H1 (cell line): ENCODE measurements at regions of chr1 and their contacts with region 1.

Region 1: DNA sequence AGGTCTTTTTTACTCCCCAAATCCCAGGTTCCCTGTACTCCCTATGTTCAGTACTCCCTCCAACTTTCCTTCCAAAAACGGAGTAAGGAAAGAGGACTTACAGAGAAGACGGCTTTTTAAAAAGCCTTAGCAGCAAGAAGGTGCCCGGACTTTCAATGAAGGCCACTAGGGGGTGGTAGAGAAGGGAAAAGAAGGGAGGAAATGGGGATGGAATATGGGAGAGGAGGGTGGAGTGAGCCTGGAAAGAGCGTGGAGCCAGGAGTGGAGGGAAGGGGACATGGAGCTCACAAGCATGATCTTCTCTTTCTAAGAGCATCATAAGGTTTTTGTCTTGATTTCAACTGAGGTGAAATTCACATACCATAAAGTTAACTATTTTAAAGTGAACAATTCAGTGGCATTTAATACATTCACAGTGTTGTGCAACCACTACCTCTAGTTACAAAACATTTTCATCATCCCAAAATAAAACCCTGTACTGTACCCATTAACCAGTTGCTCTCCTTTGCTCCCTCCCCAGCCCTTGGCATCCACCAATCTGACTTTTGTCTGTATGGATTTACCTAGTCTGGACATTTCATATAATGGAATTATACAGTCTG is 129.9 kb downstream of the ZNF281 start:
- DNase-seq: peak; percentile 36 to 84
- H3K4me3 ChIP-seq: no peak overlapping the region
- H3K27ac ChIP-seq: no peak overlapping the region
- H3K4me1 ChIP-seq: peaks cover 0 to 4% (median 0%) of the 10 kb centered on the region in 4 experiments; a peak in 2 of 7 replicates
- H3K27me3 ChIP-seq: no peaks in the 10 kb centered on the region
- CTCF ChIP-seq: peak; percentile 26 to 89 (median 81)
- EP300 ChIP-seq: no peak
- POLR2A ChIP-seq: no peak
- RAD21 ChIP-seq: peak; percentile 88 to 91

Region 2: DNA sequence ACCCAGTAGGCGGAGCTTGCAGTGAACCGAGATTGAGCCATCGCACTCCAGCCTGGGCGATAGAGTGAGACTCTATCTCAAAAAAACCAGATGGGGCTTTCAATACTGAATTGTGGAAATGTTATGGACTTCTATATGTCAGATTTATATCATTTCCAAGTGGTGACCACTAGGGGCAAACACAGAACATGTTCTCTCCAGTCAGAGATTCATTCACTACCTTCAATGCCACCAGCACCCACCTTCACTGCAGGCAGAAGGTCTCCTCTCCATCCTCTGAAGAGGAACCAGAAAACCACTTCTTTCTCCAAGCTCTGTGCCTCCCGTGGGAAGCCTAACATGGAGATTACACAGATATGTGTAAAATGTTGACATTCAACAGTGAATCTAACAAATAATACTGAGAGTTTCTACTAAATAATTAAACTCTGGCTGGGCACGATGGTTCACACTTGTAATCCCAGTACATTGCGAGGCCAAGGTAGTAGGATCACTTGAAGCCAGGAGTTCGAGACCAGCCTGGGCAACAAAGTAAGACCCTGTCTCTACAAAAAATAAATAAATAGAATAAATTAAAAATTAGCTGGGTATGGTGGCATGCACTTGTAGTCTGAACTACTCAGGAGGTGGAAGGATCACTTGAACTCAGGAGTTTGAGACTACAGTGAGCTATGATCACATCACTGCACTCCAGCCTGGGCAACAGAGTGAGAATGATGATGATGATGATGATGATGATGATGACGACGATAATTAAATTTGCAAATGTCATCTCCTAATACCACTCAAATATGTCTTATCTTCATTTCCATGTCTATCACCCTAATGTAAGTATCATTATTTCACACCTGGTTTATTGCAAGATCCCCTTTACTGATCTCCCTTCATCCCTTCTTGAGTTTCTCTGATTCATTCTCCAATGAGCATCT is 21.2 kb before region 1 on chr1:
- CTCF ChIA-PET with region 1: interaction called, 56 read pairs
- POLR2A ChIA-PET with region 1: no interaction called
- DNase-seq: no peak
- H3K4me3 ChIP-seq: no peak overlapping the region
- H3K27ac ChIP-seq: no peak overlapping the region
- H3K4me1 ChIP-seq: no peaks in the 10 kb centered on the region
- H3K27me3 ChIP-seq: no peaks in the 10 kb centered on the region
- CTCF ChIP-seq: peak in 2 of 3 experiments; percentile 14 to 38; a peak in 2 of 4 replicates
- EP300 ChIP-seq: no peak
- POLR2A ChIP-seq: no peak
- RAD21 ChIP-seq: peak; percentile 33 to 35; a peak in 3 of 4 replicates

Region 3: GRCh38 chr1:200296091-200296661 is 16.3 kb after region 1 on chr1:
- CTCF ChIA-PET with region 1: interaction called, 74 read pairs
- POLR2A ChIA-PET with region 1: interaction called, 3 read pairs
- DNase-seq: no peak
- H3K4me3 ChIP-seq: no peak overlapping the region
- H3K27ac ChIP-seq: no peak overlapping the region
- H3K4me1 ChIP-seq: no peaks in the 10 kb centered on the region
- H3K27me3 ChIP-seq: peaks cover 0 to 2% (median 0%) of the 10 kb centered on the region in 4 experiments; a peak in 2 of 7 replicates
- CTCF ChIP-seq: no peak
- EP300 ChIP-seq: no peak
- POLR2A ChIP-seq: no peak
- RAD21 ChIP-seq: no peak

Region 4: GRCh38 chr1:200346700-200347099 is 66.8 kb after region 1 on chr1:
- CTCF ChIA-PET with region 1: no interaction called
- POLR2A ChIA-PET with region 1: no interaction called
- DNase-seq: no peak
- H3K4me3 ChIP-seq: no peak overlapping the region
- H3K27ac ChIP-seq: no peak overlapping the region
- H3K4me1 ChIP-seq: no peaks in the 10 kb centered on the region
- H3K27me3 ChIP-seq: no peaks in the 10 kb centered on the region
- CTCF ChIP-seq: no peak
- EP300 ChIP-seq: no peak
- POLR2A ChIP-seq: no peak
- RAD21 ChIP-seq: no peak

Region 5: DNA sequence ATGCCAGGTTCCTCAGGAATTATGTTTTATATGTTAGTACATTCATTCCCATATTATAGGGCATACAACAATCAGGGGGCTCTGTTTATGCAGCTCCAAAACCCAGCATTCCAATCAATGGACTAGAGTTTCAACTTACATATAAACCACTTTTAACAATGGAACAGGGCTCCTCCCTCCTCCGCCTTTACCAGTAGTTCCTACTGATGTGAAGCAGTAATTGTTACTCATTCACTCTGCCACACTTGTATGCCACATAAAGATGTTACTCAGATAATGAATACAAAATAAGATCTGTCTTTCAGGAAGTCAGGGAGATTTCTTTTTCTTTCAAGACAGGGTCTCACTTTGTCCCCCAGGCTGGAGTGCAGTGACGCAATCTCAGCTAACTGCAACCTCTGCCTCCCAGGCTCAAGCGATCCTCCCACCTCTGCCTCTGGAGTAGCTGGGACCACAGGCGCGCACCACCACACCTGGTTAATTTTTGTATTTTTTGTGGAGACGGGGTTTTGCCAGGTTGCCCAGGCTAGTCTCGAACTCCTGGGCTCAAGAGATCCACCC is 112.8 kb after region 1 on chr1:
- CTCF ChIA-PET with region 1: interaction called, 14 read pairs
- POLR2A ChIA-PET with region 1: no interaction called
- DNase-seq: no peak
- H3K4me3 ChIP-seq: peak overlapping the region in 1 of 4 experiments; percentile 37; a peak in 1 of 8 replicates
- H3K27ac ChIP-seq: no peak overlapping the region; the same call in 1 of the 2 replicates
- H3K4me1 ChIP-seq: peaks cover 10 to 28% (median 17%) of the 10 kb centered on the region in 4 experiments; a peak in 6 of 7 replicates
- H3K27me3 ChIP-seq: no peaks in the 10 kb centered on the region
- CTCF ChIP-seq: no peak
- EP300 ChIP-seq: no peak
- POLR2A ChIP-seq: no peak
- RAD21 ChIP-seq: no peak

Region 6: GRCh38 chr1:200468264-200469001 is 188.5 kb after region 1 on chr1:
- CTCF ChIA-PET with region 1: interaction called, 10 read pairs
- POLR2A ChIA-PET with region 1: no interaction called
- DNase-seq: no peak
- H3K4me3 ChIP-seq: no peak overlapping the region
- H3K27ac ChIP-seq: no peak overlapping the region
- H3K4me1 ChIP-seq: no peaks in the 10 kb centered on the region
- H3K27me3 ChIP-seq: no peaks in the 10 kb centered on the region
- CTCF ChIP-seq: no peak
- EP300 ChIP-seq: no peak
- POLR2A ChIP-seq: no peak
- RAD21 ChIP-seq: no peak

Region 7: GRCh38 chr1:200496937-200497336 is 217.0 kb after region 1 on chr1:
- CTCF ChIA-PET with region 1: interaction called, 76 read pairs
- POLR2A ChIA-PET with region 1: no interaction called
- DNase-seq: no peak
- H3K4me3 ChIP-seq: no peak overlapping the region
- H3K27ac ChIP-seq: no peak overlapping the region
- H3K4me1 ChIP-seq: no peaks in the 10 kb centered on the region
- H3K27me3 ChIP-seq: no peaks in the 10 kb centered on the region
- CTCF ChIP-seq: no peak
- EP300 ChIP-seq: no peak
- POLR2A ChIP-seq: no peak
- RAD21 ChIP-seq: 0 out of 4 replicates have a peak, but pooled peaks of 1 of the 2 experiments have one; percentile 15